BJ (cell line): ENCODE measurements at regions of chr9 and their contacts with region 1.

Region 1: DNA sequence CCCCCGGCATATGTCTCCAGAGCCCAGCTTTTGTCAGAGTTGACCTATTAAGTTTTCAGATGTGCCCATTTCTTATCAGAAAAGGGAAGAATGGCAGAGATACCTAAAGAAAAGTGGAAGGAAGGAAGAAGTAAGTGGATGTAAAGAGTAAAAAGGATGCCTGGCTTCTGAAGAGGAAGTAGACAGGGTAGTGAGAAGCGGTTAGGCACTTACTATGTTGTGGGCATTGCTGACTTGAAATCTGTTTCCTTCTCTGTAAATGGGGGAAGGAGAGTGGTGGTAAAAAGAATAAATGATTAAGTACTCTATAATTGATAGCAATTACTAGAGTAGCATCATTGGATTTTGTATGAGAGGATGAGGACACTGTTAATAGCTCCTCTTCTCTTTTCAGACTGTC is 9.9 kb downstream of the ANP32B start:
- DNase-seq: no peak
- H3K4me3 ChIP-seq: no peak overlapping the region
- H3K27me3 ChIP-seq: no peaks in the 10 kb centered on the region
- CTCF ChIP-seq: no peak

Region 2: DNA sequence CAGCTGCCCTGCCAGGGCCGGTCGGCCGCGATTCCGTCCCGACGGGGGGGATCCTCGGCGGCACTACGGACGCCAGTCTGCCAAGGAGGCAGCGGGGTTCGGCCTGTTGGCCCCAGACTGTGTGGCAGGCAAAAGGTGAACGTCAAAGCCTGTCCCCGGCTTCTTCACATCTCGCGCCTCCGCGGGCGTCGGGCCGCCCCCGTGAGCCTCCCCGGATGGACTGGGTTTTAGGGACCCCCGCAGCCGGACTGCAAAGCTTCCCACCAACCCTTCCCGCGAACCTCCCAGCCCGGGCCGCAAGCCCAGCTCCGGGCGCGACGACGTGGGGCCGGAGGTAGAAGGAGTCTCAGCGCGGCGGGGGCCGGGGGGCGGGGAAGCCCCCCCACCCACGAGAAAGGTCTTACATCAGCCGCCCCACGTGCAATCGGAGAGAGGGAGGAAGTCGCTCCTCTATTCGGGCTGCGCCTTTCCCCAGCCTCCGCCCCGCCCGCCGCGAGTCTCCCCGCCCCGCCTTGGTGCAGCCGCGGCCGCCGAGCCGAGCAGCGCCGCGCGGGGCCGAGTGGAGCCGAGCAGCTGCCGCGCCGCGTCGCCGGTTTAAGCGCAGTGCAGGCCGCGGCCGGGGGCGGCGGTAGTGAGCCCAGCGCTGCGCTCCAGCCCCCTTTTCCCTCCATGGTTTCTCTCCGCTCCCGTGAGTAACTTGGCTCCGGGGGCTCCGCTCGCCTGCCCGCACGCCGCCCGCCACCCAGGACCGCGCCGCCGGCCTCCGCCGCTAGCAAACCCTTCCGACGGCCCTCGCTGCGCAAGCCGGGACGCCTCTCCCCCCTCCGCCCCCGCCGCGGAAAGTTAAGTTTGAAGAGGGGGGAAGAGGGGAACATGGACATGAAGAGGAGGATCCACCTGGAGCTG is 10.1 kb before region 1 on chr9 and contains the start of gene ANP32B:
- CTCF ChIA-PET with region 1: interaction called, 19 read pairs
- POLR2A ChIA-PET with region 1: no interaction called
- DNase-seq: peak; percentile 54
- H3K4me3 ChIP-seq: peak within 1 kb of the TSS; percentile 88
- H3K27me3 ChIP-seq: no peaks in the 10 kb centered on the region; the same call in 1 of the 2 replicates
- CTCF ChIP-seq: peak; percentile 61
- polyA plus RNA-seq, gene ANP32B: 18.3 and 40.5 TPM in 2 replicates

Region 3: DNA sequence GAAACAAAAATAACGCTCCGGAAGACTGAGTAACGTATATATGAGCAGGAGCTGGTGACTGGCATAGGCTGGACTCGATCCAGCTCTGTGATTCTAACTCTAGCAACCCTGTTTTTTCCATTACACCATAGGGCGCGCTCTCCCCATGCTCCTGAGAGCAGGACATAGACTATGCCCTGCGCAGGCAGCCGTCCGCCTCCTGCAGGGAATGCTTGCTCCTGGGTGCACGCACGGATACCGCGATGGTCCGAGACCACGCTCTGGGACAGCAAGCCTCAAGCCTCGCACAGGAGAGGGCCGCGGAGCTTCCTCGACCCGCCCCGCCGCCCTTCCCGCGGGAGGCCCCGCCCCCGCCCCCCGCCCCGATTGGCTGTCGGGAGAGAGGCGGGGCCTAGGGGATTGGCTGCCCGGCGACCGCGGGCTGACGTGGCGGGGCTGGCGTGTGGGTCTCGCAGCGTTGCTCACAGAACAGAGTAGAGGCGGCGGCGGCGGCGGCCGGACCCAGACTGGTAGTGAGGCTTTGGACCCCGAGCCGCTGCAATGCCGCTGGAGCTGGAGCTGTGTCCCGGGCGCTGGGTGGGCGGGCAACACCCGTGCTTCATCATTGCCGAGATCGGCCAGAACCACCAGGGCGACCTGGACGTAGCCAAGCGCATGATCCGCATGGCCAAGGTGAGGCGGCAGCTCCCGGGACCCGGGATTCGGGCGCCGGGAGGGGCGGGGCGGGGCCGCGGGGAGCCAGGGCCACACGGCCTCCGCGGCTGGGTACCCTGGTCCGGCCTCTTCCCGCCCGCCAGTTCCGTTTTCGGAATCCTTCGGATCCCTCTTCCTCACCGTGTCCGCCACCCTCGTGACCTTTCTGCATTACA is 63.5 kb after region 1 on chr9 and contains the start of gene NANS:
- CTCF ChIA-PET with region 1: no interaction called
- POLR2A ChIA-PET with region 1: interaction called, 28 read pairs
- DNase-seq: peak; percentile 66
- H3K4me3 ChIP-seq: peak within 1 kb of the TSS; percentile 70
- H3K27me3 ChIP-seq: no peaks in the 10 kb centered on the region
- CTCF ChIP-seq: peak; percentile 35; the same call in 1 of the 2 replicates
- polyA plus RNA-seq, gene NANS: 142 TPM in 2 replicates